Right ventricle myocardium inferior (tissue), 1 donor: ENCODE measurements at regions of chr4 and their contacts with region 1.

Region 1: GRCh38 chr4:88378691-88379559 is at the start of gene HERC6:
- DNase-seq: peak; percentile 89
- ATAC-seq: peak; percentile 95
- total RNA-seq, gene HERC6: 6.1 TPM

Region 2: DNA sequence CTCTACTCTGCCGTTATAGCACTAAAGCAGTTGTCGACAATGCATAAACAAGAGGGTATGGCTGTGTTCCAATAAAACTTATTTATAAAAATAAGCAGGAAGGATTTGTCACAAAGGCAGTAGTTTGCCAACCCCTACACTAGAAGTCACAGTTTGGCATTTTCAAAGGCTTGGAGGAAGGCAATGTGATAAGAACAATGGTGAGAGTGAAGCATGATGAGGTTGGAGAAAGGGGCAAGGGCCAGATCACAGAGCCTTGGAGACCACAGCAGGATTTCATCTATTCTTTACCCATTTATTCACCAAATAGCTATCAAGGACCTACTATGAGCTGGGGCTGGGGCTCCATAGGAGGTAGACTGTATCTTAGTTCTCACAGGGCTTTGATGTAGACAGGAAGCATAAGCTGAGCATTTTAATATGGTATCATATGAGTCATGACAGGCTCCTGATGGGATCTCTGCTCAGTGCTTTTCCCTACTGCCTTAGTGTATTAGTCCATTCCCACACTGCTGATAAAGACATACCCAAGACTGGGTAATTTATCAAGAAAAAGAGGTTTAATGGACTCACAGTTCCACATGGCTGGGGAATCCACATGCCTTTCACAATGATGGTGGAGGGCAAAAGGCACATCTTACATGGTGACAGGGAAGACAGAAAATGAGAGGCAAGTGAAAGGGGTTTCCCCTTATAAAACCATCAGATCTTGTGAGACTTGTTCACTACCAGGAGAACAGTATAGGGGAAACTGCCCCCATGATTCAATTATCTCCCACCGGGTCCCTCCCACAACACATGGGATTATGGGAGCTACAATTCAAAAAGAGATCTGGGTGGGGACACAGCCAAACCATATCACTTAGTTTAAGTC is 153.5 kb before region 1 on chr4:
- intact Hi-C with region 1: loop called (anchors 5 kb)
- DNase-seq: no peak
- ATAC-seq: no peak